MCF 10A (cell line): ENCODE measurements at regions of chr7 and their contacts with region 1.

Region 1: GRCh38 chr7:106071356-106071998 is 40.6 kb downstream of the SYPL1 start:
- DNase-seq: peak; percentile 81
- H3K4me3 Mint-ChIP-seq: no peak overlapping the region
- H3K27ac Mint-ChIP-seq: peak overlapping the region; percentile 49
- H3K4me1 Mint-ChIP-seq: peaks cover 49% of the 10 kb centered on the region
- H3K27me3 Mint-ChIP-seq: no peaks in the 10 kb centered on the region
- CTCF ChIP-seq: no peak

Region 2: GRCh38 chr7:105958012-105958411 is 113.5 kb before region 1 on chr7:
- CTCF ChIA-PET with region 1: no interaction called
- POLR2A ChIA-PET with region 1: no interaction called
- intact Hi-C with region 1: no loop called
- DNase-seq: no peak
- H3K4me3 Mint-ChIP-seq: no peak overlapping the region
- H3K27ac Mint-ChIP-seq: no peak overlapping the region
- H3K4me1 Mint-ChIP-seq: no peaks in the 10 kb centered on the region
- H3K27me3 Mint-ChIP-seq: peaks cover 12% of the 10 kb centered on the region
- CTCF ChIP-seq: no peak

Region 3: GRCh38 chr7:106022193-106022821 is 49.2 kb before region 1 on chr7:
- CTCF ChIA-PET with region 1: no interaction called
- POLR2A ChIA-PET with region 1: no interaction called
- intact Hi-C with region 1: no loop called
- DNase-seq: no peak
- H3K4me3 Mint-ChIP-seq: no peak overlapping the region
- H3K27ac Mint-ChIP-seq: no peak overlapping the region
- H3K4me1 Mint-ChIP-seq: no peaks in the 10 kb centered on the region
- H3K27me3 Mint-ChIP-seq: no peaks in the 10 kb centered on the region
- CTCF ChIP-seq: no peak

Region 4: GRCh38 chr7:106086062-106086461 is 14.6 kb after region 1 on chr7:
- CTCF ChIA-PET with region 1: interaction called, 14 read pairs
- POLR2A ChIA-PET with region 1: interaction called, 30 read pairs
- intact Hi-C with region 1: no loop called
- DNase-seq: no peak
- H3K4me3 Mint-ChIP-seq: no peak overlapping the region
- H3K27ac Mint-ChIP-seq: no peak overlapping the region
- H3K4me1 Mint-ChIP-seq: no peaks in the 10 kb centered on the region
- H3K27me3 Mint-ChIP-seq: no peaks in the 10 kb centered on the region
- CTCF ChIP-seq: no peak

Region 5: DNA sequence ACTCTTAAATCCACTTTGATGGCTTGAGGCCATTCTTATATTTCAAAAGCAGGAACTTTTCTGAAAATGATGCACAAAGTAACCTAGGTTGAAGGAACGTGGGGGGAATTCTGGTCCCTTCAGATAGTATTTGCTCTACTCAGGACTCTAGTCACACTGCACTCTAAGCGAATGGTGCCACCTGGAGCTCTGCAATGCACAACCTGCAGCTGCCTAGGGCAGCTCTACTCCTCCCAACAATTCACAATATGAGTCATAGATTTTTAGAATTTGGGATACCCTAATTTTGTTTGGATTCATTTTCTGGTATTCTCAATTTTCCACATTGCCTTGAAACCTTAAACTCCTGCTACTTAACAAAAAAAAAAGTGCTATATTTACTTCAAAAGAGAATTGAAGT is 23.3 kb after region 1 on chr7:
- CTCF ChIA-PET with region 1: interaction called, 6 read pairs
- POLR2A ChIA-PET with region 1: interaction called, 36 read pairs
- intact Hi-C with region 1: no loop called
- DNase-seq: peak; percentile 23
- H3K4me3 Mint-ChIP-seq: no peak overlapping the region
- H3K27ac Mint-ChIP-seq: no peak overlapping the region
- H3K4me1 Mint-ChIP-seq: peaks cover 11% of the 10 kb centered on the region
- H3K27me3 Mint-ChIP-seq: no peaks in the 10 kb centered on the region
- CTCF ChIP-seq: no peak

Region 6: GRCh38 chr7:106100863-106101629 is 29.6 kb after region 1 on chr7:
- CTCF ChIA-PET with region 1: interaction called, 3 read pairs
- POLR2A ChIA-PET with region 1: interaction called, 36 read pairs
- intact Hi-C with region 1: no loop called
- DNase-seq: no peak
- H3K4me3 Mint-ChIP-seq: no peak overlapping the region
- H3K27ac Mint-ChIP-seq: no peak overlapping the region
- H3K4me1 Mint-ChIP-seq: peaks cover 50% of the 10 kb centered on the region
- H3K27me3 Mint-ChIP-seq: no peaks in the 10 kb centered on the region
- CTCF ChIP-seq: no peak

Region 7: DNA sequence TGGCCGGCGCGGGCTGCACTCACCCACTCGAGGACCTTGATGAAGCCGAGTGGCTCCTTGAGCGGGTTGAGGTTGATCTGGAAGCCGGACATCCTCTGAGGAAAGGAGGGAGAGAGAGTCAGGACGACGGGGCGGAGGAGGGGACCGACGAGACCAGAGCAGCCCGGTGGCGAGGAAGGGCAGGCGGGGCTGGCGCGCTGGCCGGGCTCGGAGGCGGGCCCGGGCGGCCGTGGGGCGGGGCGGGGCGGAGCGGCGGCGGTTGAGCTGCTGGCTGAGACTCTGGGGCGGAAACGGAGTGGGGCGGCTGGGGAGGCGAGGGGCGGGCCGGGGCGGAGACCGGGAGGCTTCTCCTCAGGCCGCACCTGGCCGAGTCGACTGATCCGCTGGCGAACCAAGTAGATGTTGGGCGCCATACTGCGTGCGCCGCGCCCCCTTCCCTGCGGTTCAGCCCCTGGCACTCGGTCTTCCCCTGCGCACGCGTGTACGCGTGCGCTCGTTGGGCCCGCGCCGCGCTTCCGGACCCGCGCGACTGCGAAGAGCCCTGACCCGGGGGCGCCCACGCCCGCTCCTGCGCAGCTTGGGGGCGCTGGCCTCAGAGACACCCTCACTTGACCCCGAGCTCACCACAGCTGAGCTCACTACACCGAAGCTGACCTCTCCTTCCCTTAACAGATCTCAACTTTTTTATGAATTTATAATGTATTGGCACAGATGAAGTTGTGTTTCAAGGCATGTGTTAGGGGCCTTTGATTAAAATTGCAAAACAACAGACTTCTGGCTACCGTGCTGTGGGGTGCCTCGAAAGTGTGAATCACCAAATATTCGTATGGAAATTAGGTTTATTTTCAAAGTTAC is 40.9 kb after region 1 on chr7 and contains the start of gene SYPL1:
- CTCF ChIA-PET with region 1: interaction called, 8 read pairs
- POLR2A ChIA-PET with region 1: interaction called, 139 read pairs
- intact Hi-C with region 1: no loop called
- DNase-seq: peak; percentile 92
- H3K4me3 Mint-ChIP-seq: peak within 1 kb of the TSS; percentile 88
- H3K27ac Mint-ChIP-seq: peak within 1 kb of the TSS; percentile 95
- H3K4me1 Mint-ChIP-seq: peaks cover 23% of the 10 kb centered on the region
- H3K27me3 Mint-ChIP-seq: no peaks in the 10 kb centered on the region
- CTCF ChIP-seq: no peak
- total RNA-seq, gene SYPL1: 77.6 and 92.1 TPM in 2 replicates

Region 8: DNA sequence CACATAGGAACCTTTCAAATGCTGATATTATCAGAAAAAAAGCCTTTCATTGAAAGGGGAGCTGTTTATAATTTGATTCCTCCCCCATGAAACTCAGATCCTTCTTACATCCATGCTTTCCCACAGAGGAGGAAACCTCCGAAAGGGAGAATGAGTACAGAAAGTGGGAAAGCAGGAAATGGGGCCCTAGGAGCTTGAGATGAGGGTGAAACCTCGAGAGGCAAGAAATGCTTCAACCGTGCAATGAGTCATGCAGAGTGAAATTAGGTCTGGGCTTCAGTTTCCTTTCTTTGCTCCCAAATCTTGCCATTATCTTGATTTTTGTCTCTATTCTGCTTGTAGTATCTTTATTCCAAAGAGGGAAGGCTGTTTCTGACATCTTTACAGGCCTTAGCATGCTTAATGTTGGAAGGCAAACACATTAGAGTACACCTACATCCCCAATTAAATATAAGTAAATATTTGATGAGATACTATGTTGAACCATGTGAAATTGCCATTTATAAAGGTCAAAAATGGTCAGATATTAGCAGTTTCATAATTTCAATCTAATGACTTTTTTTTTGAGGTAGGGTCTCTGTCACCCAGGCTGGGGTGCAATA is 134.2 kb after region 1 on chr7:
- CTCF ChIA-PET with region 1: no interaction called
- POLR2A ChIA-PET with region 1: no interaction called
- intact Hi-C with region 1: no loop called
- DNase-seq: peak; percentile 30
- H3K4me3 Mint-ChIP-seq: no peak overlapping the region
- H3K27ac Mint-ChIP-seq: no peak overlapping the region
- H3K4me1 Mint-ChIP-seq: peaks cover 12% of the 10 kb centered on the region
- H3K27me3 Mint-ChIP-seq: no peaks in the 10 kb centered on the region
- CTCF ChIP-seq: no peak

Region 9: DNA sequence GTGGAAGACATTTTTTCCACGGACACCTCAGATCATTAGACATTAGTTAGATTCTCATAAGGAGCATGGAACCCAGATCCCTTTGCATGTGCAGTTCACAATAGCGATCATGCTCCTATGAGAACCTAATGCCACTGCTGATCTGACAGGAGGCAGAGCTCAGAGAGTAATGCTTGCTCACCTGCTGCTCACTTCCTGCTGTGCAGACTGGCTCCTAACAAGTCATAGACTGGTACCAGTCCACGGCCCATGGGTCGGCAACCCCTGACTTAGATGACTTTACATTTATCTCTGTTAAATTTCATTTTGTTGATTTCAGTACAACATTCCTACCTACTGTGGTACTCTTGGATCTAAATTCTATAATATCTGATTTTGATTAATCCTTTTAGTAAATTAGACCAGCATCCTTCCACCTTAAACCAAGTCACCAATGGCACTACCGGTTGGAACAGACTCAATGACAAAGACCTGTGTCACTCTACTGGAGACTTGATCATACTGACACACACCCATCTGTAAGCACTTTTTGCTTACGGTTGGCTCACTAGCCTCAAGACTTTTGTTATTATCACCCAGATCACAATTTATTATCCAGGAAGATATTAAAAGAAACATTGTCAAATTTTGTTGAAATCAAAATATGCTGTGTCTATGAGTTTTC is 597.5 kb after region 1 on chr7:
- CTCF ChIA-PET with region 1: no interaction called
- POLR2A ChIA-PET with region 1: no interaction called
- intact Hi-C with region 1: no loop called
- DNase-seq: no peak
- H3K4me3 Mint-ChIP-seq: no peak overlapping the region
- H3K27ac Mint-ChIP-seq: no peak overlapping the region
- H3K4me1 Mint-ChIP-seq: no peaks in the 10 kb centered on the region
- H3K27me3 Mint-ChIP-seq: no peaks in the 10 kb centered on the region
- CTCF ChIP-seq: no peak